ENCODE measurements at regions of chr15 and their contacts with region 1.

Region 1: GRCh38 chr15:42772144-42772543 is 35.2 kb upstream of the CDAN1 start:
- DNase-seq: peak; percentile 26 to 50
- ATAC-seq: peak in 1 of 4 donors; percentile 71
- H3K4me3 ChIP-seq: no peak overlapping the region
- H3K27ac ChIP-seq: no peak overlapping the region
- H3K4me1 ChIP-seq: peaks cover 11% of the 10 kb centered on the region
- H3K27me3 ChIP-seq: no peaks in the 10 kb centered on the region
- CTCF ChIP-seq: no peak

Region 2: GRCh38 chr15:42171122-42171521 is 601.0 kb before region 1 on chr15:
- intact Hi-C with region 1: no loop called
- DNase-seq: no peak
- ATAC-seq: peak in 1 of 4 donors; percentile 27
- H3K4me3 ChIP-seq: no peak overlapping the region
- H3K27ac ChIP-seq: no peak overlapping the region
- H3K4me1 ChIP-seq: no peaks in the 10 kb centered on the region
- H3K27me3 ChIP-seq: no peaks in the 10 kb centered on the region
- CTCF ChIP-seq: no peak

Region 3: DNA sequence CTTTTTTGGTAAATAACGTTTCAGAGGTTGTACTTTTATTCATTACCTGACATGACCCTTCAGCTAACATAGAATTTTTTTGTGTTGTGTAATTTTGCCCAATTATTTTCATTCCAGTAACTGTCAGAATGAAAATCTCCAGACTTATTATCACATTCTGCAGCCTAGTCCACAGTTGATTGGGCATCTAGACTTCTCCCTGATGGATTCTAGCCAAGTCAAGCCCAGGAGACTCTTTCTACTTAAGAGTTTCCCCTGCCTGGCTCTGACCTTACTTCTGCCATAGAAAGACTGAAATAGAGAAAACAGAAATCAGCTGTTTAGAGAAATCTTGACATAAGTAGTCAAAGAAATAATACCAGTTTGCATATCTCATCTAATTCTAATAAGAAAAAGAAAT is 47.6 kb after region 1 on chr15:
- intact Hi-C with region 1: loop called in 1 of 2 experiments (anchors 5 kb)
- DNase-seq: no peak
- ATAC-seq: no peak
- H3K4me3 ChIP-seq: no peak overlapping the region
- H3K27ac ChIP-seq: no peak overlapping the region
- H3K4me1 ChIP-seq: no peaks in the 10 kb centered on the region
- H3K27me3 ChIP-seq: no peaks in the 10 kb centered on the region
- CTCF ChIP-seq: no peak